ENCODE measurements at regions of chr9 and their contacts with region 1.

Region 1: GRCh38 chr9:78439190-78439865 is 142.4 kb downstream of the PSAT1 start:
- DNase-seq: peak; percentile 85
- H3K4me3 ChIP-seq: no peak overlapping the region
- H3K27ac ChIP-seq: no peak overlapping the region
- H3K4me1 ChIP-seq: peaks cover 5% of the 10 kb centered on the region
- H3K27me3 ChIP-seq: no peaks in the 10 kb centered on the region
- CTCF ChIP-seq: peak; percentile 97

Region 2: DNA sequence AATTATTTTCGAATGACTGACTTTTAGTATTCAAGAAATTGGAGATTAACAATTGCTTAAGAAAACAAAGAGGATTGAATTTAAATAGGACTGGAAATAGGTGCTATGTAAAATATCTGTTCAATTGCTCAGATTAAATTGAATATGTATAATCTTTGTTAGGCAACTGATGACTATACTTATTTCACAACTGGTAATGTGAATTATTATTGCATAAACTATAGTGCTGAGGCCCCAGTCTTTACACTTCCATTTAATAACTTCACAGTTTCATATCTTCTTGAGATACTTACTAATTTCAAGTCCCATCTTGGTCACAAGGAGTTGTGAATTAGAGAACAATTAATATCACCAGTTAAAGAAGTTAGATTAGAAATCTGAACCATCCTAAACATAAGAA is 186.7 kb before region 1 on chr9:
- CTCF ChIA-PET with region 1: no interaction called
- POLR2A ChIA-PET with region 1: no interaction called
- intact Hi-C with region 1: no loop called
- DNase-seq: no peak
- H3K4me3 ChIP-seq: no peak overlapping the region
- H3K27ac ChIP-seq: no peak overlapping the region
- H3K4me1 ChIP-seq: no peaks in the 10 kb centered on the region
- H3K27me3 ChIP-seq: no peaks in the 10 kb centered on the region
- CTCF ChIP-seq: no peak

Region 3: DNA sequence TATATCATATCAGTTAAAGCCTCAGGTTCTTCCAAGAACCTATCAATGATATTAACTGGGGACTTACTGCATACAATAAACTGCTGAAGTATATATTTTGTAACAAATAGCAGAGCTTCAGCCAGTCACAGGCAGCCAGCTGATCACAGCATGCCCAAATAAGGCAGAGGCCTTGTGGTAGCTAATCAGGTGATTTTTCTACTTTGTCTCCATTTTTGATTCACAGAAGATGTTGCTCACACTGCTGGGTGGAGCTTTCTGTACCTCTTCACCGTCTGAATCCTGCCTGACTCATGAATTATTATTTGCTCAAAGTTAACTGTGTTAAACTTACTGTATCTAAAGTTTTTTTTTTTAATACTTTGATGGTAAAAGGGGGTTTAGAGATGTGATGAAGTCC is 215.0 kb after region 1 on chr9:
- CTCF ChIA-PET with region 1: no interaction called
- POLR2A ChIA-PET with region 1: no interaction called
- intact Hi-C with region 1: no loop called
- DNase-seq: no peak
- H3K4me3 ChIP-seq: no peak overlapping the region
- H3K27ac ChIP-seq: no peak overlapping the region
- H3K4me1 ChIP-seq: no peaks in the 10 kb centered on the region
- H3K27me3 ChIP-seq: peaks cover 4% of the 10 kb centered on the region
- CTCF ChIP-seq: no peak

Region 4: DNA sequence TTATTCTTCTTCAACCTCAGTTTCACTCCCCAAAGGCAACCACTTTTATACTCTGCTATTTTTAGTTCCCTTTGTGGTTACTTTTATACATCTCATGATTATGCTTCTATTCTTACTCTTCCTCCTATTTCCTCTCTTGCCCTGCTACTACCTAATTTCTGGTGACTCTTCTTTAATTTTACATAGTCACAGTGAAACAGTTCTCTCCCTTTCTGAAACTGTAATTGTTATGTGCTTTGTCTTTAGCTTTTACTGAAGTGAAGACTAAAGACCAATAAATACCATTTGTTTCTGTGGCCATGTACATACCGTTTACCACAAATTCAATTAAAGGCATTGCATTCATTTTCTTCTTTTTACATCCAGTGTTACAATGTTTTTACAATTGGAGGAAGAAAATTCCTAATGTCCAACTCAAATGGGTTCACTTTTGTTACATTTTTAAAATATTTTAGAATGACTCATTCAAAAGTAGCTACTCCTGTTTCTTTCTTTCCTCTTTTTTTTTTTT is 268.2 kb after region 1 on chr9:
- CTCF ChIA-PET with region 1: no interaction called
- POLR2A ChIA-PET with region 1: no interaction called
- intact Hi-C with region 1: loop called (anchors 5 kb)
- DNase-seq: no peak
- H3K4me3 ChIP-seq: no peak overlapping the region
- H3K27ac ChIP-seq: no peak overlapping the region
- H3K4me1 ChIP-seq: no peaks in the 10 kb centered on the region
- H3K27me3 ChIP-seq: no peaks in the 10 kb centered on the region
- CTCF ChIP-seq: no peak

Region 5: DNA sequence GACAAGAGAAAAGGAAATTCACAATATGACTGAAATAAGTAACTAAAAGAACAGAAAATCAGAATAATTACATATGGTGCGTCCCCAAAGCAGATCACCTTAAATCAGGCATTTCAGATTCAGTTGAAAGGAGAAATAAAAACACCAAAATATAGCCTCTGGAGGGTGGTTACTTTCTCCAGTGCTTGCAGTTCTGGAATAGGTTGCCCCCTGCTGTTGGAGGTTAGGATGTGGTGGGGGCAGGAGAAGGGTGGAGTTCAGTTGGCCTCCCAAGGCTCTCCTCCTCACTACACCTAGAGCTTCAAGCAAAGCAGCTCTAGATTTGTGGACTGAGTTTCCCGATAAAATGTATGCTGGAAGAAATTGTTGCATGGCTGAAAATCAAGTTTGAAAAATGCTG is 794.2 kb after region 1 on chr9:
- CTCF ChIA-PET with region 1: no interaction called
- POLR2A ChIA-PET with region 1: no interaction called
- intact Hi-C with region 1: loop called (anchors 5 kb)
- DNase-seq: peak; percentile 29
- H3K4me3 ChIP-seq: no peak overlapping the region
- H3K27ac ChIP-seq: no peak overlapping the region
- H3K4me1 ChIP-seq: no peaks in the 10 kb centered on the region
- H3K27me3 ChIP-seq: peaks cover 44% of the 10 kb centered on the region
- CTCF ChIP-seq: peak; percentile 39

Measured in A673 (cell line).